ENCODE measurements at regions of chr11 and their contacts with region 1.

Region 1: DNA sequence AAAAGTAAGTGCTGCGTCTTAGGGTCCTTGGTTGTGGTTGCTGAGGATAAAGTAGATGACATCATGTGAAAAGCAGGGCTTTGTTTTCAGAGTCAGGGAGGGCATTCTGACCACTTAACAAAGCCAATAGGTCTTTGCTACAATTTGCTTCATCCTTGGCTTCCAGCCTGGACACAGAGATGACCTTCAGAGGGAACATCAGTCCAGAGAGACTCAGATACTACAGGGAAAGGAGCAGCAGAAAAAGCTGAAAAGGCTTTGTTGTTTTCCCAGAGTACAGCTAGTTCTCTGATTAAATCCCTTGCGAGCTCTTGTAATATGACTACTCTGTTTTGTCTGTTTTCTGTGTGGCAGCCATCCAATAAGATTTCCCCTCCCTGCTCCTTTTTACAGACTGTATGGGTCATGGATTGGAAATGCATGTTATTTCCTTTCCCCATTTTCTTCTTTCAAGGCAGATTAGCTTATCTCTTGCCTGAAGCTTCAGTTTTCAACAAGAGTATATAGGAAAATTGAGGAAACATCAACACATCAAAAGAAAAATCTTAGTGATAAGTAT is 31.9 kb downstream of the ATG13 start:
- DNase-seq: peak in 1 of 2 donors; percentile 84
- ATAC-seq: peak; percentile 66 to 97 (median 94)
- H3K4me3 ChIP-seq: peak overlapping the region in 1 of 10 donors; percentile 5
- H3K27ac ChIP-seq: peak overlapping the region; percentile 39 to 85 (median 76)
- H3K4me1 ChIP-seq: peaks cover 2 to 38% (median 24%) of the 10 kb centered on the region in 9 donors
- H3K27me3 ChIP-seq: no peaks in the 10 kb centered on the region
- CTCF ChIP-seq: no peak

Region 2: GRCh38 chr11:46693597-46694012 is 44.3 kb after region 1 on chr11:
- intact Hi-C with region 1: loop called in 1 of 10 experiments (anchors 2 kb)
- DNase-seq: no peak
- ATAC-seq: peak in 4 of 8 donors; percentile 13 to 19 (median 18)
- H3K4me3 ChIP-seq: no peak overlapping the region
- H3K27ac ChIP-seq: peak overlapping the region in 8 of 10 donors; percentile 24 to 96 (median 80)
- H3K4me1 ChIP-seq: peaks cover 25 to 56% (median 50%) of the 10 kb centered on the region in 9 donors
- H3K27me3 ChIP-seq: no peaks in the 10 kb centered on the region
- CTCF ChIP-seq: no peak